A549 (cell line): ENCODE measurements at regions of chr16 and their contacts with region 1.

Region 1: DNA sequence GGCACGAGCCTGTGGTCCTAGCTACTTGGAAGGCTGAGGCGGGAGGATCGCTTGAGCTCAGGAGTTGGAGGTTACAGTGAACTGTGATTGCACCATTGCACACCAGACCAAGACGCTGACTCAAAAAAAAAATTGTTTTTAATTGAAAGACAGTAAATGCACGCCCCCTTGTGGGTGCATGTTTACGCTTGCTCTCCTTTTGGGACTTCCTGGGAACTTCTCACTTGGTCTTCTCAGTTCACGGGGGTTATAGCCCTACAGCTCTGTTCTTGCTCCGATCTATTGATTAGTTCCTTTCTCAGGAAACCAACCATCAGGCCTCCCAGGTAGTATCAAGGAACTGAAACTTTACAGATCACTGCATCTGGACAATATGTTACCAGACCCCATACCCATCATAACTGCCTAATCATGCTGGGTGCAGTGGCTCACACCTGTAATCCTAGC is 14.2 kb upstream of the RIPOR1 start:
- DNase-seq: peak; percentile 69 to 89
- ATAC-seq: peak; percentile 82 to 86
- H3K4me3 ChIP-seq: no peak overlapping the region
- H3K27ac ChIP-seq: peak overlapping the region; percentile 15 to 43; a peak in 4 of 6 replicates
- H3K4me1 ChIP-seq: peaks cover 30% of the 10 kb centered on the region
- CTCF ChIP-seq: peak; percentile 79
- EP300 ChIP-seq: no peak
- POLR2A ChIP-seq: no peak
- RAD21 ChIP-seq: peak; percentile 71

Region 2: GRCh38 chr16:67339453-67339852 is 175.0 kb before region 1 on chr16:
- CTCF ChIA-PET with region 1: no interaction called
- POLR2A ChIA-PET with region 1: no interaction called
- DNase-seq: peak in 1 of 2 experiments; percentile 45
- ATAC-seq: peak; percentile 59 to 75; a peak in 5 of 6 replicates
- H3K4me3 ChIP-seq: no peak overlapping the region
- H3K27ac ChIP-seq: no peak overlapping the region
- H3K4me1 ChIP-seq: no peaks in the 10 kb centered on the region
- CTCF ChIP-seq: peak; percentile 37
- EP300 ChIP-seq: no peak
- POLR2A ChIP-seq: no peak
- RAD21 ChIP-seq: peak; percentile 53 to 62; a peak in 4 of 5 replicates

Region 3: DNA sequence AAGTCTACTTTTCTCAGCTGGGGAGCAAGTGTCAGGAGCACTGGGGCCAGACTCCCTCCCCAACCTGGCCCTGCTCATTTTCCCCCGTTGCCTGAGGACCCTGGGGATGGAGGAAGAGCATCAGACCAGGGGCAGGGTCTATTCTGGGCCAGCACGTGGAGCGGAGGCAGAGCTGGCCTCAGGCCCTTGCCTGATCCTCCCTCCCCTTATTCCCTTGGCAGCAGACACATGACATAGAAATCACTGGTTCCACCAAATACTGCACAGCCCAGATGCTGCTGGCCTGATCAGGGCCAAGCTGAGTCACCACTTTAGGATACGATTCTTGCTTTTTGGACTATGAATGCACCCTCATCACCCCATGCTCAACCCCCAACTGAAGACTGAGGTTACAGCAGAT is 15.3 kb before region 1 on chr16:
- CTCF ChIA-PET with region 1: interaction called, 278 read pairs
- POLR2A ChIA-PET with region 1: no interaction called
- DNase-seq: no peak
- ATAC-seq: no peak
- H3K4me3 ChIP-seq: no peak overlapping the region
- H3K27ac ChIP-seq: no peak overlapping the region
- H3K4me1 ChIP-seq: peaks cover under 1% of the 10 kb centered on the region; the same call in 1 of the 3 replicates
- CTCF ChIP-seq: no peak
- EP300 ChIP-seq: no peak
- POLR2A ChIP-seq: no peak
- RAD21 ChIP-seq: no peak

Region 4: DNA sequence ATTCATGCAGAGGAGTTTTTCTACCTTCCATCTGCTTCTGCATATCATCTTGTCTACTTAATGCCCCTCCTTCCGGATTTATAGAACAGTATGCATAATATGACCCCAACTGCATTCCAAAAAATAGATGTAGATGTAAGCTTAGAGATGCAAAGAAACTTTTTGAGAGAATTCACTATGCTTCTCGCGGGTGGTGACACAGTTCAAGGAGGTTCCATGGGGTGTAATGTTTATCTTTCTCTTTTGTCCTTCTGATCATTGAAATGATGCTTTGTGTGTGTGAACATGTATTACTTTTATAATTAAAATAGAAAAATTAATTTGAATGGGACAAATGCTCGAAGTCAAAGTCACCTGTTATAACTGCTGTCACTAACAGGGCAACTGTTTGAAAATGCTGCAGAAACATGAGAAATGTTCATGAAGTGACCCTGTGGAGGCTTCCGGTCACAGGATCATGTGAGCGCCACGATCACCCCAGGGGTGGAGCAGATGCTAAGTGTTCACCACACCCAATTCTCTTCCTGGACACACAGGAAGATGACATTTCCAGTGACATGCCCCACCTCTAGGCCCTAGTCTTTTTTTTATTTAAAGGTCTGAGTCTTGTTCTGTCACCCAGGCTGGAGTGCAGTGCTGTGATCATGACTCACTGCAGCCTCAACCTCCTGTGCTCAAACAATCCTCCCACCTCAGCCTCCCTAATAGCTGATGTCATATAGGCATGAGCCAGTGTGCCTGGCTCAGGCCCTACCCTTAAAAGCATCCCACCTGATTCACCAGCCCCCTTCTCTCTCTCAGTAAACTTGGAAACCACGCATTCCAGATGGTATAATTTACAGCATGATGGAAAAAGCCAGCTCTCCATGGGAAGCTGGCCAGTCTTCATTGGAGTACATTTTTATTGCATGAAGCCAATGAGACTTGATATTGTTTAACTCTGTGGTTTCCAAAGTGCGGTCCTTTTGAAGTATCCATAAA is 10.1 kb before region 1 on chr16:
- CTCF ChIA-PET with region 1: interaction called, 278 read pairs
- POLR2A ChIA-PET with region 1: no interaction called
- DNase-seq: peak in 1 of 2 experiments; percentile 31
- ATAC-seq: peak; percentile 24 to 28; a peak in 3 of 6 replicates
- H3K4me3 ChIP-seq: no peak overlapping the region
- H3K27ac ChIP-seq: no peak overlapping the region
- H3K4me1 ChIP-seq: peaks cover 8% of the 10 kb centered on the region; the same call in 1 of the 3 replicates
- CTCF ChIP-seq: no peak
- EP300 ChIP-seq: no peak
- POLR2A ChIP-seq: no peak
- RAD21 ChIP-seq: no peak

Region 5: GRCh38 chr16:67820608-67821384 is 306.4 kb after region 1 on chr16:
- CTCF ChIA-PET with region 1: no interaction called
- POLR2A ChIA-PET with region 1: no interaction called
- DNase-seq: no peak
- ATAC-seq: no peak
- H3K4me3 ChIP-seq: no peak overlapping the region
- H3K27ac ChIP-seq: no peak overlapping the region
- H3K4me1 ChIP-seq: no peaks in the 10 kb centered on the region
- CTCF ChIP-seq: no peak
- EP300 ChIP-seq: no peak
- POLR2A ChIP-seq: no peak
- RAD21 ChIP-seq: no peak